Dorsolateral prefrontal cortex (tissue), 120 donors: ENCODE measurements at regions of chr6 and their contacts with region 1.

Region 1: DNA sequence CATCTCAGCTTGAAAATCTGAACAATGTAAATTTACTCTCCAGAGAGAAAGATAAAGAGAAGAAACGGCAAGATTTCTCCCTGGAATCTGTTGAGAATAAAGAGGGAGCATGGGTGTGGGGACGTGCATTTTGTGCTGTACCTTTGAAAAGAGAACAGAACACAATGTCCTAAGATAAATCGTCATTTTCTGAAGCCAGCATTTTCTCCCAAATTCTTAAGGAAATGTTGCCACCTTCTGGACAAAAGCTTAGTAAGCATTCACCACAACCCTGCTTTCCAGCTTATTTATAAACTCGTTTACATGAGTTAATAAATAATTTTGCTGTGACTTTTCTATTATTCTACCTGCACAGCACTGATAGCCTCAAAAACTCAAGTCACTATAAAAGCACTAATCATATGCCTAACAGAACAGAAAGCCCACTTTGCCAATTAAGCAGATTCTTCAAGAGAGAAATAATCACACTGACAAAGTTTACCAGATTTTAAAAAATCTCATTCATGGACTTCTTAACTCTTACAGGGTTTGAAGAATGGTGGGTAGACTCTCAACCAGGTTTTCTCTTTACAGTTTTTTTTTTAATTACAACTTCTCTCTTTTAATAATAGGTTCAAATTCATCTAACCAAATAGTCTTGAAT is 155.8 kb downstream of the MBOAT1 start:
- DNase-seq: no peak
- H3K4me3 ChIP-seq: peak overlapping the region in 11 of 59 donors; percentile 5 to 35 (median 23)
- H3K27ac ChIP-seq: peak overlapping the region in 7 of 59 donors; percentile 1 to 57 (median 14)
- H3K27me3 ChIP-seq: no peaks in the 10 kb centered on the region
- CTCF ChIP-seq: peak; percentile 52 to 86 (median 72)

Region 2: GRCh38 chr6:18503593-18504231 is 1552.8 kb before region 1 on chr6:
- intact Hi-C with region 1: loop called in 1 of 2 experiments (anchors 10 kb)
- DNase-seq: peak in 9 of 10 donors; percentile 30 to 73 (median 60)
- H3K4me3 ChIP-seq: peak overlapping the region in 57 of 59 donors; percentile 1 to 62 (median 40)
- H3K27ac ChIP-seq: peak overlapping the region in 23 of 59 donors; percentile 4 to 70 (median 38)
- H3K27me3 ChIP-seq: no peaks in the 10 kb centered on the region
- CTCF ChIP-seq: peak; percentile 62 to 99 (median 88)

Region 3: DNA sequence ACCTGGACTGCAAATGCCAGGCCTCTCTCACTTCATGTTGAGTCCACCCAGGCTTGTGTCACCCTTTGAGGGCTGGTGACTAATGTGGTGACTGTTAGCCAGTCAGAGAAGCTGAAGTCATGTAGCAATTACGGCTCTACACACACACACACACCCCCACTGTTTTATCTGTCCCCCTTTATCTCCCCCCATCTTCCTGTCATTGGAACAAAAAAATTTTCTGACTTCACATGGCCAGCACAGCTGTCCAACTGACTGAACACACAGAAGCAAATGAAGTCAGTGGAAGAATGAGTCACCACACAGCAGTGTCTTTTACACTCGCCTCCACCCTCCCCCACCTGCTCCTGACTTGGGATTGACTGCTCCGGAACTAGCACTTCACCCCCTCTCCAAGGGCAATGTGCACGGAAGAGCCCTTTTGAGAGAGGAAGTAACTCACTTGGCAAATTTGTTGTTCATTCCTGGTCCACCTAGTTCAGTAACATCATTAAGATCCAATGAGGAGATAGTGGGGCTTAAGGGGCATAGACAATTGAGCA is 1471.4 kb before region 1 on chr6:
- intact Hi-C with region 1: loop called in 1 of 2 experiments (anchors 5 kb)
- DNase-seq: peak in 5 of 10 donors; percentile 26 to 82 (median 60)
- H3K4me3 ChIP-seq: no peak overlapping the region
- H3K27ac ChIP-seq: peak overlapping the region in 1 of 59 donors; percentile 46
- H3K27me3 ChIP-seq: no peaks in the 10 kb centered on the region
- CTCF ChIP-seq: no peak

Region 4: GRCh38 chr6:18601516-18602020 is 1454.9 kb before region 1 on chr6:
- intact Hi-C with region 1: loop called (anchors 2 to 10 kb)
- DNase-seq: peak in 3 of 10 donors; percentile 11 to 44 (median 37)
- H3K4me3 ChIP-seq: no peak overlapping the region
- H3K27ac ChIP-seq: no peak overlapping the region
- H3K27me3 ChIP-seq: no peaks in the 10 kb centered on the region
- CTCF ChIP-seq: no peak

Region 5: DNA sequence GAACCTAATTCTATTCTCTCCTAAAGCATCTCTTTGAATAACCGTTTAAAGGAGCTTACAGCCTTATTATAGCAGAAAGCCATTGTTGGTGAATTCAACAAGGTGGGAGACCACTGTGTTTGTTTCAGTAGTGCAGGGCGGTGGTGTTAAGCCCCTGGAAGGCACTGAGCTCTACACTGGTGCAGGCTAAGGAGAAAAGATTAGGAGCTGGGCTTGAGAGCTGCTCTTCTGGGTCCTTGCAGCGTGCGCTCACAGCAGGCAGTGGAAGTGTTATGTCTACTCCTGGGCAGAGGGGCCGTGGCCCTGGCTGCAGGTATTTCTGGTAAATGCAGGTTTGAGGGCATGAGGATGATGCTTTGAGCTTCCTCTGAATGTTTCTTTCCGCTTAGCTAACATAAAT is 1308.2 kb before region 1 on chr6:
- intact Hi-C with region 1: loop called (anchors 5 to 10 kb)
- DNase-seq: no peak
- H3K4me3 ChIP-seq: no peak overlapping the region
- H3K27ac ChIP-seq: no peak overlapping the region
- H3K27me3 ChIP-seq: peaks cover 0 to 9% (median 0%) of the 10 kb centered on the region in 45 donors
- CTCF ChIP-seq: no peak